Naive thymus-derived CD4-positive, alpha-beta T cell (primary cell): ENCODE measurements at regions of chr3 and their contacts with region 1.

Region 1: DNA sequence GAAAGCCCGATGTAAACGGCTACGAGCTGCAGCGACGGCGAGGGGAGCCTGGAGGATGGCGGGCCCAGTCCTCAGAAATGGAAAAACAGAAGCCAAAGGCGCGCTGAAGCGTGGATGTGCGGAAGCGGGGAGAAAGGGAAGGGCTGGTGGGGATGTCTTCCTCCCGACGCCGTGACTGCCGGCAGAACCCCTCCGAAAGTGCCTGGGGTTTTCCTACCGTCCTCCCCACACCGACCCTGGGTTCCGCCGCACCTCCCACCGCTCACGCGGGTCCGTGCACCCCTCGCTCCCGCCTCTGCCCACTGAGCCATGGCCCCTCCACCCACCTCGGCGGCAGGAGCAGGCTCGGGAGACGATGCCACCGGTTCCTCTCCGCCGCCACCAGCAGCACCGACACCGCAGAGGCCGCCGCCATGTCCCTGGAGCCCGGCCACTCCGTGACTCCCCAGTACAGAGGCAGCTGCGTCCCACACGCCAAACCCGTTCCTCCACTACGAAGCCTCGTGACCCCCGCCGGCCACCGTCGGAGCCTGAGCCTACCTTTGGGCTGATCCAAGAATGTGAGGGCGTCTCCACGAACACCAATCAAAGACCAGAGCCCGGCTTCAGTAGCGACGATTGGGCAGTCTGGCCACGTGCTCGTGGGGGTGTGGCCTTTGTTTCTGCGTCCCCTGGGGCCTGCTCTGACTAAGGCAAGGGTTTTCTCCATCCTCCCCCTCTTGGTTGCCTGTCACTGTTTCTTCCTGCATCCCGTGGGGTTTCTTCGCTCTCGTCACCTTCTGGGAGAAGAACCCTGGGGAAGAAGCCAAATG is at the start of gene MCCC1:
- DNase-seq: peak; percentile 82 to 98 (median 97)
- ATAC-seq: peak; percentile 99
- H3K4me3 ChIP-seq: peak within 1 kb of the TSS; percentile 73
- H3K4me3 Mint-ChIP-seq: peak within 1 kb of the TSS; percentile 87 to 98 (median 97)
- H3K27ac ChIP-seq: peak within 1 kb of the TSS; percentile 83
- H3K27ac Mint-ChIP-seq: peak within 1 kb of the TSS; percentile 90 to 99 (median 97)
- H3K4me1 ChIP-seq: peaks cover 7 to 10% of the 10 kb centered on the region in 2 donors
- H3K4me1 Mint-ChIP-seq: peaks cover 18 to 52% (median 43%) of the 10 kb centered on the region in 7 donors
- H3K27me3 ChIP-seq: no peaks in the 10 kb centered on the region
- H3K27me3 Mint-ChIP-seq: no peaks in the 10 kb centered on the region
- total RNA-seq, gene MCCC1: 17.7 to 37.5 (median 31.8) TPM

Region 2: GRCh38 chr3:182713743-182714517 is 385.3 kb before region 1 on chr3:
- CTCF ChIA-PET with region 1: no interaction called
- POLR2A ChIA-PET with region 1: no interaction called
- intact Hi-C with region 1: loop called in 1 of 2 experiments (anchors 10 kb)
- DNase-seq: peak in 6 of 9 donors; percentile 11 to 51 (median 33)
- ATAC-seq: peak; percentile 66
- H3K4me3 ChIP-seq: no peak overlapping the region
- H3K4me3 Mint-ChIP-seq: no peak overlapping the region
- H3K27ac ChIP-seq: no peak overlapping the region
- H3K27ac Mint-ChIP-seq: no peak overlapping the region
- H3K4me1 ChIP-seq: no peaks in the 10 kb centered on the region
- H3K4me1 Mint-ChIP-seq: peaks cover 4 to 16% (median 7%) of the 10 kb centered on the region in 7 donors
- H3K27me3 ChIP-seq: no peaks in the 10 kb centered on the region
- H3K27me3 Mint-ChIP-seq: peaks cover 0 to 2% (median 0%) of the 10 kb centered on the region in 5 donors

Region 3: DNA sequence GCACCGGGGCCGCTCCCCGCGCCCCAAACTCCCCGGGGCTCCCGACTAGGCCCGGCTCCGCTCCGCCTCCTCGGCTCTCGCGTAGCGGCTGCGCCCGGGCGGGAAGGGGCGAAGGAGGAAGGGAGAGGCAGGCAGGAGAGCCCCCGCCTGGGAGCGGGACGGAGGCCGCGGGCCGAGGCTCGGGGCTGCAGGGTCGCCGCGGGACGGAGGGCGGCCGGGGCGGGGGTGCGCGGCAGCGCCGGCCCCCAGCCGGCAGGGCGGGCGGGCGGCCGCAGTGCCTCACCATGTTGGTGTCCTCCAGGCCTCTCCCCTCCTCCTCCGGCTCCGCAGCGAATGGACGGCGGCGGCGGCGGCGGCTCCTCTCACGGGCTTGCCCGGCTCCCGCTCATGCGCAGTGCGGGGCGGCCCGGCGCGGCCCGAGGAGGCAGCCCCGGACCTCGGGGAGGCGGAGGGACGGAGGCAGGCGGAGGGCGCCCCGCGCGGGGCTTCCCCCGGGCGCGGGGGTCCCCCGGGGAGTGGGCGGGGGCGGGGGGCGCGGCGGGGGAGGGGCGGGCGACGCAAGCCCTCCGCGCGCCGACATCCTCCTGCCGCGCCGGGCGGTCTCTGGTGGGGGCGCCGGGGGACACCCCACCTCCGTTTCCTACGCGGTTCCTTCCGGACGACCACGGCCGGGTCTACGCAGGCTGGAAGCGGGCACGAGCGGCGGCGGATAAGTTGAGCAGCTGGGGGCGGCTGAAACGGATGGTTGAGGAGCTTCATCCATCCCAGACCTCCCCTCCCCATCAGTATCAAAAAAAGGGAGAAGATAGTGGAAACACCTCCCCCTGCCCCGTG is 118.8 kb before region 1 on chr3 and contains the start of gene DCUN1D1:
- CTCF ChIA-PET with region 1: no interaction called
- POLR2A ChIA-PET with region 1: no interaction called
- intact Hi-C with region 1: loop called (anchors 1 to 2 kb)
- DNase-seq: peak; percentile 77 to 95 (median 85)
- ATAC-seq: peak; percentile 94
- H3K4me3 ChIP-seq: peak within 1 kb of the TSS; percentile 75
- H3K4me3 Mint-ChIP-seq: peak within 1 kb of the TSS in 9 of 10 donors; percentile 87 to 97 (median 91)
- H3K27ac ChIP-seq: peak within 1 kb of the TSS; percentile 79
- H3K27ac Mint-ChIP-seq: peak within 1 kb of the TSS; percentile 73 to 95 (median 91)
- H3K4me1 ChIP-seq: peaks cover 18 to 20% of the 10 kb centered on the region in 2 donors
- H3K4me1 Mint-ChIP-seq: peaks cover 14 to 46% (median 42%) of the 10 kb centered on the region in 7 donors
- H3K27me3 ChIP-seq: no peaks in the 10 kb centered on the region
- H3K27me3 Mint-ChIP-seq: no peaks in the 10 kb centered on the region
- total RNA-seq, gene DCUN1D1: 23.7 to 53.0 (median 34.0) TPM

Region 4: DNA sequence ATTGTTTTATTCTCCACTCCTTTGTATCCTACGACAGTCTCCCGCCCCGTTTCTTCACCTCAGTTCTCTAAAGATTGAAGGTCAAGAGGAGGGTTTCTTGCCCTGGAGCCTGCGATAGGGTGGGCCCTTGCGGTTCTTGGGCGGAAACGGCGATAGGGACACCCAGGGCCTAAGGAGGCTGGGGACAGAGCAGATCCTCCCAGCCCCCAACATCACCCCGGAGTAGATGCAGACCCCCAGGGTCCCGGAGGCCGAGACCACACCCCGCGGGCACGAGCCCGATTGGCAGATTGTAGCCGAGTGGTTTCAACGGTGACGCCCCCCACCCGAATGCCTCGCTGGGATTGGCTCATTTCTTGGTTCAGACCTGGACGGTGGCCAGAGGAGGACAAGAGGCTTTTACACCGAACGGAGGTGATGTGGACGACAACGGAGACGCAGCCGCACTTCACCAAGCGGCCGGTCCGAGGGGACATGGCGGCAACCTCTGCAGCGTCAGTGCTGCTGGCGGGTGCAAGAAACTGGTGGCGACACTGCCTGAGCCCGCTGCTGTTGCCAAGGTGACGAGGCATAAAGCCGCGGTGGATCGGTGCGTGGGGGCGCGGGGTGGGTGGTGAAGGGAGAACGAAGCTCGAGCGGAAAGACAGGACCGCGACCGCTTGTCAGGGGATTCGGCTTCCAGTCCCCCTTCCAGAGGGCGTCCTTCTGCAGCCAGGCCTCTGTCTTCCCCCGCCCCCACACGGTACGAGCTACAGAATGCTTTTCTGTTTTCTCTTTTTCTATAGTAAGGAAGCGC is 348.2 kb after region 1 on chr3:
- CTCF ChIA-PET with region 1: interaction called, 9 read pairs
- POLR2A ChIA-PET with region 1: interaction called, 4 read pairs
- intact Hi-C with region 1: loop called in 1 of 2 experiments (anchors 1 kb)
- DNase-seq: peak; percentile 39 to 74 (median 51)
- ATAC-seq: peak; percentile 87
- H3K4me3 ChIP-seq: peak overlapping the region; percentile 80
- H3K4me3 Mint-ChIP-seq: peak overlapping the region; percentile 88 to 99 (median 93)
- H3K27ac ChIP-seq: peak overlapping the region; percentile 47
- H3K27ac Mint-ChIP-seq: peak overlapping the region; percentile 60 to 93 (median 81)
- H3K4me1 ChIP-seq: peaks cover 5 to 12% of the 10 kb centered on the region in 2 donors
- H3K4me1 Mint-ChIP-seq: peaks cover 13 to 26% (median 17%) of the 10 kb centered on the region in 7 donors
- H3K27me3 ChIP-seq: no peaks in the 10 kb centered on the region
- H3K27me3 Mint-ChIP-seq: peaks cover 0 to 20% (median 0%) of the 10 kb centered on the region in 5 donors

Region 5: GRCh38 chr3:184017672-184018423 is 918.6 kb after region 1 on chr3 and contains the start of gene ABCC5:
- CTCF ChIA-PET with region 1: no interaction called
- POLR2A ChIA-PET with region 1: no interaction called
- intact Hi-C with region 1: loop called in 1 of 2 experiments (anchors 5 kb)
- DNase-seq: peak; percentile 62 to 84 (median 79)
- ATAC-seq: peak; percentile 96
- H3K4me3 ChIP-seq: peak within 1 kb of the TSS; percentile 100
- H3K4me3 Mint-ChIP-seq: peak within 1 kb of the TSS; percentile 96 to 100 (median 99)
- H3K27ac ChIP-seq: peak within 1 kb of the TSS; percentile 72
- H3K27ac Mint-ChIP-seq: peak within 1 kb of the TSS; percentile 70 to 95 (median 91)
- H3K4me1 ChIP-seq: peaks cover 8 to 14% of the 10 kb centered on the region in 2 donors
- H3K4me1 Mint-ChIP-seq: peaks cover 11 to 33% (median 25%) of the 10 kb centered on the region in 7 donors
- H3K27me3 ChIP-seq: no peaks in the 10 kb centered on the region
- H3K27me3 Mint-ChIP-seq: peaks cover 5 to 15% (median 9%) of the 10 kb centered on the region in 5 donors
- total RNA-seq, gene ABCC5: 15.6 to 50.4 (median 25.5) TPM

Region 6: DNA sequence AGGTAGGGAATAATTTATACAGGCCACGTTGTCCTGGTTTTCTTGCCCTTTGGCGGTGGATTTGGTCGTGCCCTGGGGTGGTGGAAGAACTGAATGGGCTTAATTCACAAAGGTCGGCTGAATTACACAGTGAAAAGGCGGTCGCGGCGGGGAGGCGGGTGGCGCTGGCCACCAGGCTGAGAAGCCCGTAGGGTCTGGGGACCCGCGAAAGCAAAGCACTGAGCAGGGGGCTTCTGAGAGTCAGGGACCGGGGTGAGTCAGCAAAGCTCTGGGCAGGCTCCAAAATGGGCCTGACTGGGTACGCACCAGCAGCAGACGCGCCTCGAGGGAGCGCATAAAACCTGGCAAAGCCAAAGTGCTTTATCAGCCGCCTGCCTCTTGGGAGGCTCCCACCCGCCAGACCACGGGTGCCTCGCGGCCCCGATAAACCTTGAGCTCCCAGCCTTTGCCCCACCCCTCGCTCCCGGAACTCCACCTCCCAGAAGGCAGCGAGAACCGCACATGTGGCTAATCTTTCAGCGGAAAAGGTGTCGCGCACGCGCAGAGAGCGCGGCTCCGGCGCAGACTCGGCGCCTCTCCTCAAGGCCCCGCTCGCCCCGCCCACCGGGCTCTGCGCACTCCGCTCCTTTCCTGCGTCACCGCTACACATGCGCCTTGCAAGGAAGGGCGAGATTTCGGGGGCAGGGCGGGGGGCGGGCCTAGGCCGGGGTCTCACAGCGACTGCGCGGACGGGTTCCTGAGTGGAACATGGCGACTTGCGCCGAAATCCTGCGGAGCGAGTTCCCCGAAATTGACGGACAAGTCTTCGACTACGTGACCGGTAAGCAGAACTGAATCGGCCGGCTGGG is 1086.5 kb after region 1 on chr3 and contains the start of gene ABCF3:
- CTCF ChIA-PET with region 1: no interaction called
- POLR2A ChIA-PET with region 1: no interaction called
- intact Hi-C with region 1: loop called in 1 of 2 experiments (anchors 1 kb)
- DNase-seq: peak; percentile 98 to 100 (median 99)
- ATAC-seq: peak; percentile 96
- H3K4me3 ChIP-seq: peak within 1 kb of the TSS; percentile 81
- H3K4me3 Mint-ChIP-seq: peak within 1 kb of the TSS; percentile 91 to 100 (median 98)
- H3K27ac ChIP-seq: peak within 1 kb of the TSS; percentile 89
- H3K27ac Mint-ChIP-seq: peak within 1 kb of the TSS; percentile 89 to 98 (median 97)
- H3K4me1 ChIP-seq: peaks cover 18 to 24% of the 10 kb centered on the region in 2 donors
- H3K4me1 Mint-ChIP-seq: peaks cover 31 to 52% (median 43%) of the 10 kb centered on the region in 7 donors
- H3K27me3 ChIP-seq: no peaks in the 10 kb centered on the region
- H3K27me3 Mint-ChIP-seq: no peaks in the 10 kb centered on the region
- total RNA-seq, gene ABCF3: 79.3 to 153 (median 117) TPM